ENCODE measurements at regions of chr10 and their contacts with region 1.

Region 1: DNA sequence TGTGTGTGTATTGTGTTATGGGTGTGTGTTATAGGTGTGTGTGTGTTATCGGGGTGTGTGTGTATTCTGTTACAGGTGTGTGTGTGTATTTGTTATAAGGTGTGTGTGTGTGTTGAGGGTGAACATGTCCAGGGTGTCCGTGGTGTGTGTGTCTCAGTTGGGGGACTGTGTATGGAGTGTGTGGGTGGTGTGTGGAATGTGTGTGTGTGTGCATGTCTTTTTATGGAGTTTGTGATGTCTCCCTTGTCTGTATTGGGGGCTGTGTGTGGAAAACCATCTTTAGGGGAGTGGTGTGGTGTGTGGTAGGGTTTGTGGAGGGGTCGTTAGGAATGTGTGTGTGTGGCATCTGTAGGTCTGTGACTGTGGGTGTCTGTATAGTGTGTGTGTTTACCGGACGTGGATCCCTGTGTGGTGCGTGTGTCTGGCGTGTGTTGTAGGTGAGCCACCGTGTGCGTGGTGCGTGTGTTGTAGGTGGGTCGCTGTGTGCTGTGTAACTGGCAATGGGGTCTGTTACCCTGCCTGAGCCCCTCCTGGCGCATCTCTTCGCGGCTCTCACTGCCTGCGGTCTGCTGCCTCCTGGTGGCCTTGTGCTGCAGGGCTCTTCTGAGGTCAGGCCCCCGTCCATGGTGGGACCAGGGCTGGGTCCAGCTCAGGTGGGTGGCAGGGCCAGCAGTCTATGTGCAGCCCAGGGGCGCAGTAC is 61.7 kb downstream of the PALD1 start:
- DNase-seq: no peak
- H3K4me3 ChIP-seq: no peak overlapping the region
- H3K27ac ChIP-seq: no peak overlapping the region
- H3K4me1 ChIP-seq: no peaks in the 10 kb centered on the region
- H3K27me3 ChIP-seq: no peaks in the 10 kb centered on the region
- CTCF ChIP-seq: peak; percentile 69 to 76

Region 2: DNA sequence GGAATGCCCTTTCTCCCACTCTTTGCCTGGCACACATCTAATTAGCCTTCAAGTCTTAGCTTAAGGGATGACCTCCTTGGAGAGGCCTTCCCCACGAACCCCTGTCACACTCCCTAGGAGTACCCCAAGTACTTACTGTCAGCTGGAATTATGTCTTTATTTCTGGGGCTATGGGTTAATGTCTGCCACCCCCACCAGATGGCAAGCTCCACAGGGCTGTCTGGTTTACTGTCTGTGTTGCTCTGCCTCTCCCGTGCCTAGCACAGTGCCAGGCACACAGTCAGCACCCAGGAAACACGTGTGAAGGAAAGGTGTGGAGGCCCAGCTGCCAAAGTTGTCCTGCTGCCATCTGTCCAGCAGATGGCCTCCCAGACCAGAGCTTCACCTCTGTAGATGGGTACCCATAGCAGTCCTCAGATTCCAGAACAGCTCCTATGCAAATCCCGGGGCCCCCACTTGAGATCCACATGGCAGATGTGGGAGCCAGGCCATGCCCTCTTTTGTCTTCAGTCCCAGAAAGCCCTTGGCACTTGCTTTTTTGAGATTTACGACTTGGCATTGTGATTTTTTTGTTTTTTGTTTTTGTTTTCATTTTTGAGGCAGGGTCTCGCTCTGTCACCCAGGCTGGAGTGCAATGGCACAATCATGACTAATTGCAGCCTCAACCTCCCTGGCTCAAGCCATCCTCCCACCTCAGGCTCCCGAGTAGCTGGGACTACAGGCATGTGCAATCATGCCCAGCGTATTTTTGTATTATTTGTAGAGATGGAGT is 78.8 kb before region 1 on chr10:
- intact Hi-C with region 1: loop called (anchors 2 kb)
- DNase-seq: peak in 1 of 2 donors; percentile 54
- H3K4me3 ChIP-seq: no peak overlapping the region
- H3K27ac ChIP-seq: peak overlapping the region; percentile 41 to 89
- H3K4me1 ChIP-seq: peaks cover 0 to 51% (median 41%) of the 10 kb centered on the region in 4 donors
- H3K27me3 ChIP-seq: no peaks in the 10 kb centered on the region
- CTCF ChIP-seq: peak; percentile 88 to 89

Region 3: GRCh38 chr10:70605161-70605560 is 64.9 kb after region 1 on chr10:
- intact Hi-C with region 1: no loop called
- DNase-seq: no peak
- H3K4me3 ChIP-seq: no peak overlapping the region
- H3K27ac ChIP-seq: no peak overlapping the region
- H3K4me1 ChIP-seq: no peaks in the 10 kb centered on the region
- H3K27me3 ChIP-seq: no peaks in the 10 kb centered on the region
- CTCF ChIP-seq: no peak

Region 4: GRCh38 chr10:70714245-70714644 is 174.0 kb after region 1 on chr10:
- intact Hi-C with region 1: no loop called
- DNase-seq: no peak
- H3K4me3 ChIP-seq: no peak overlapping the region
- H3K27ac ChIP-seq: no peak overlapping the region
- H3K4me1 ChIP-seq: no peaks in the 10 kb centered on the region
- H3K27me3 ChIP-seq: no peaks in the 10 kb centered on the region
- CTCF ChIP-seq: no peak